ENCODE measurements at regions of chr22 and their contacts with region 1.

Region 1: GRCh38 chr22:42217019-42217751 is 53.3 kb downstream of the TCF20 start:
- DNase-seq: peak; percentile 60
- H3K4me3 Mint-ChIP-seq: peak overlapping the region; percentile 38
- H3K27ac Mint-ChIP-seq: peak overlapping the region; percentile 95
- H3K4me1 Mint-ChIP-seq: peaks cover 45% of the 10 kb centered on the region
- H3K27me3 Mint-ChIP-seq: no peaks in the 10 kb centered on the region

Region 2: GRCh38 chr22:42202669-42203068 is 14.5 kb before region 1 on chr22:
- CTCF ChIA-PET with region 1: interaction called, 7 read pairs
- POLR2A ChIA-PET with region 1: interaction called, 13 read pairs
- intact Hi-C with region 1: loop called (anchors 1 kb)
- DNase-seq: peak; percentile 80
- H3K4me3 Mint-ChIP-seq: peak overlapping the region; percentile 71
- H3K27ac Mint-ChIP-seq: peak overlapping the region; percentile 85
- H3K4me1 Mint-ChIP-seq: peaks cover 56% of the 10 kb centered on the region
- H3K27me3 Mint-ChIP-seq: no peaks in the 10 kb centered on the region

Region 3: DNA sequence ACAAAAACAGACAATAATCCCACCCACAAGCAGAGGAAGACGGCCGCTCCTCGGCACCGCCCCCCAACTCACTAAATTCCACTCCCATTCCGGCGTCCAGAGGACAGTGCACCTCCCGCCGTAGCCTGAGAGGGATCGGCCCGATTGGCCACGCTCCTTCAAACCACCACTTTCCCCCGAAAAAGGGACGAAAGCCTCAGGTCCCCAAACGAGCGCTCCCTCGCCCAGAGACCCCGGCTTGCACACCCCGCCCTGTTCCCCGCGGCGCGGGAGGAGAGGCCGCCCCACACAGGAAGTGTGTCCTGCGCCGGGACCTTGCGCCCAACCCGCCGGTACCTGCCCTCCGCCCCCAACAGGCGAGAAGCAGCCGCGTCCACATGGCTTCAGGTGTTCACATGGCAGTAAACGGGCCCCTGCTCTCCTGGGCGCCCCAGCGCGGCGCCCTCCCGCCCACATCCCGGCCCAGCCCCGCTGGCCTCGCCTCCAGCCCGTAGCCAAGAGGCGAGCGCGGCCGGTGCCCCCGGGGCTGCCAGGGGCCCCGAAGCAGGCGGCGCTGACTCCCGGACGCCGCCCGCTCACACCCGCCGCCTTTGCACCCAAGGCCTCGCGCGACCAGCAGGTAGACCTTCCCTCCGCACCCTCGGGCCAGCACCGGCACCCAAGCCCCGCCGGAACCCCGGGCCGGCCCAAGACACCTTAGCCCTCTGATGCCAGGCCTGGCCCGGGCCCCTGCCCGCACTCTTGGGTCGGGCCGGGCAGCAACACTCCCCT is 52.4 kb after region 1 on chr22:
- CTCF ChIA-PET with region 1: no interaction called
- POLR2A ChIA-PET with region 1: interaction called, 3 read pairs
- intact Hi-C with region 1: loop called (anchors 2 kb)
- DNase-seq: peak; percentile 84
- H3K4me3 Mint-ChIP-seq: peak overlapping the region; percentile 84
- H3K27ac Mint-ChIP-seq: peak overlapping the region; percentile 72
- H3K4me1 Mint-ChIP-seq: peaks cover 44% of the 10 kb centered on the region
- H3K27me3 Mint-ChIP-seq: no peaks in the 10 kb centered on the region